Common myeloid progenitor, CD34-positive (primary cell): ENCODE measurements at regions of chr4 and their contacts with region 1.

Region 1: DNA sequence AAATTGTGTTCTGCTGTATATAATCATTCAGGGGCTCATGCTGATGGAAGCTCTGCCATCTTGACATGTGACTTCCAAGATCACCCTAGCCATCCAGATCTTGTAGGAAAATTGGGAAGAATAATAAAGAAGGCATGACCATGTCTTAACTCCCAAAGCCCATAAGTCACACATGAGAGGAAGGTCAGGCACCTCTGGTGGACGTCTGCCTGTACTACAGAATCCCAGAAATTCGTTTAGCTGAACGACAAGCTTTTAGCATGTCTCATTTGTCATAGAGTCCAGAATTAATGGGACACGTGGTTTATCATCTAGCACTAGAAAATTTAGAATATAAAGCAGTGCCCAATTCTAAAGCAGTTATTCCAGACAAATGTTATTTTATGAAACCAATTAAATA is 212.7 kb downstream of the CENPC start:
- DNase-seq: peak in 2 of 3 donors; percentile 26 to 31
- H3K4me3 ChIP-seq: no peak overlapping the region
- H3K27ac ChIP-seq: no peak overlapping the region
- H3K4me1 ChIP-seq: no peaks in the 10 kb centered on the region
- H3K27me3 ChIP-seq: peaks cover 0 to 8% (median 2%) of the 10 kb centered on the region in 5 experiments

Region 2: DNA sequence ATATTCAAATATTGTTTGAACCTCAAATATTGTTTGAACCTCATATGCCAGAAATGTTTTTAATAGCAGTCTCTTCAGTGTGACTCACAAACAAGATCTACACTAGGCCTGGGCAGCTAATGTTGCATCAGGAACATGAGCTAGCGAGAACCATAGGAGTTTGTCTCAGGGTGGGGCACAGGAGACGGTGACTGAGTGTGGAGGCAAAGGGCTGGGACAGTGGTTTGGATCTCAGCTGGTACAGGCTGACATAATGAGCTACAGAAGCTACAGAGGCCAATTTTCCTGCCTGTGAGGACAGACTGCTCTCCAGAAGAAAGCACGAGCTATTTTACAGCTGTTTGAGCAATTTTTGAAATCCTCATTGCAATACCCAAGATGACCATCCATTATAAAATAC is 12.0 kb before region 1 on chr4:
- CTCF ChIA-PET with region 1: interaction called, 11 read pairs
- POLR2A ChIA-PET with region 1: no interaction called
- DNase-seq: no peak
- H3K4me3 ChIP-seq: no peak overlapping the region
- H3K27ac ChIP-seq: no peak overlapping the region
- H3K4me1 ChIP-seq: no peaks in the 10 kb centered on the region
- H3K27me3 ChIP-seq: no peaks in the 10 kb centered on the region